ENCODE measurements at regions of chr22 and their contacts with region 1.

Region 1: DNA sequence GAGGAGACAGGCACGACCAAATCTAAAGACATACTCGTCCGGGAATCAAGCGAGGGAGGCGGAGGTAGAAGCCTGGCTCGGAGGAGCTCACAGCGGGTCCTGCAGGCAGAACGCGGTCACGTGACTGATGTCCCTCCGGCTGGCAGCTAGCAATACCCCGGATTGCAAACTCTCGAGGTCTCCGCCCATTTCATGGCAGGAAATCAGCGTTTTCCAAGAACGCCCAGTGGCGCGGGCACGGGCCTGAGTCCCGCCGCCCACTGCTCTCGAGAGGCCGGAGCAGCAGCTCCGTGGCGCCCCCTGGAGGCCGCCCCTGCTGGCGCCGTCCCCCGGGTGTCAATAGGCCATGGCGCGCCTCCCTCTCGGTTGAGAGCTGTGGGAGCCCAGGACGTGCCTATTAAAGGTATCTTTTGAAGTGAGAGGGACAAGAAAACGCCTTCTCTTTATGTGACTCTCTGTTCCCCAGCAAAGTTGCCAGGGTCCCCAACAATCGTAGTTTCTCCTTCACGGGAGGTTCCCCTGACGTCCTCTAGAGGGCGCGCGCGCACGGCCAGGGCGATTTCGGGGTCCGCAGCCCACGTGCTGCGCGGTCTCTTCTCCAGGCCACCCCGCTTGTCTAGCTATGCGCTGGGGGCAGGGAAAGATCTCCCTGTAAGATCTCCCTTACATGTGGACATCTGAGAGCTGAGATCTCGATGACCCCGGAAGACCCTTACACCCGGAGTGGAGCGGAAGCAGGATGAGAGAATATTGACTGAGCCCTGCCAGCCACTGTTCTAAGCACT is 37.3 kb upstream of the RBFOX2 start:
- DNase-seq: peak; percentile 87
- H3K4me3 ChIP-seq: peak overlapping the region; percentile 31 to 60 (median 38)
- H3K27ac ChIP-seq: peak overlapping the region; percentile 79 to 84 (median 82)
- H3K4me1 ChIP-seq: peaks cover 0 to 17% (median 3%) of the 10 kb centered on the region in 4 donors
- H3K27me3 ChIP-seq: no peaks in the 10 kb centered on the region
- CTCF ChIP-seq: peak; percentile 99 to 100 (median 100)
- EP300 ChIP-seq: peak; percentile 1
- POLR2A ChIP-seq: peak; percentile 18

Region 2: DNA sequence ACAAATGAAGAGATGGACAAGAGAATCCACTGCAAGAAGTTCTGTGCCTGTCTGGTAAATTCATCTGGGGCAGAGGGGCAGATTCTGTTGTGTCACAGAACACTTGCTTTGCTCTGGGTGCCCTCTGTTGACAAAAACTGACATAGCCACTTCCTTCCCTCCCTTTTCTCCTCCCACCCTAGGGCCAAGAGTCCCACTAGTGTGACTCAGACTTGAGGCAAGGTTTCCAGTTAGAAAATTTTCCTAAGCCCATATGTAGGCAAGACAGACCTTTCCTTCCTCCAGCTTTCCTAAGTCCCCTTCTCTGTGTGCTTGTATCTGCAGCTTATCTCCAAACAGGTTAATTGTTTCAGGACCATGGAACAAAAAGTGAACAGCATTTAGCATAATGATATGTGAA is 144.2 kb before region 1 on chr22:
- in situ Hi-C with region 1: loop called in 2 of 4 experiments (anchors 10 to 25 kb)
- intact Hi-C with region 1: no loop called
- DNase-seq: peak; percentile 70
- H3K4me3 ChIP-seq: no peak overlapping the region
- H3K27ac ChIP-seq: peak overlapping the region; percentile 30 to 70 (median 60)
- H3K4me1 ChIP-seq: peaks cover 0 to 48% (median 21%) of the 10 kb centered on the region in 4 donors
- H3K27me3 ChIP-seq: no peaks in the 10 kb centered on the region
- CTCF ChIP-seq: peak; percentile 50 to 62 (median 56)
- EP300 ChIP-seq: no peak
- POLR2A ChIP-seq: no peak

Region 3: DNA sequence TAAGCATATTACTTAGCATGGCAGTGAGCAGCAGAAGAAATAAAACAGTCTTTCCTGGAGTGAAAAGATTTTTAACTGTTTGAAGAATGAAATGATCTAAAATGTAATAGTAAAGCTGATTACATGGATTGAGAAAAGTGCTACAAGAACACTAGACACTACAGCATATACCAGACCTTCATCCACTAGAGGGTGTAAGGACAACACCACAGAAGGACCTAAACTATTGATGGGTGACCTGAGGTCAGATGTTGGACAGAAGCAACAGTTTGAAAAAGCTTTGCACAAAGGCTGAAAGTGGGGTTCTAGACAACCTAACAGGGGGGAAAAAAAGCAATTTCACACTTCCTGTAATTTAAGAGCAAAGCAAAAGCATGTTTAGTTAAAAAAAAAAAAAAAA is 135.0 kb before region 1 on chr22:
- in situ Hi-C with region 1: loop called (anchors 5 to 25 kb)
- intact Hi-C with region 1: loop called (anchors 1 kb)
- DNase-seq: no peak
- H3K4me3 ChIP-seq: no peak overlapping the region
- H3K27ac ChIP-seq: peak overlapping the region in 1 of 4 donors; percentile 8
- H3K4me1 ChIP-seq: peaks cover 0 to 12% (median 4%) of the 10 kb centered on the region in 4 donors
- H3K27me3 ChIP-seq: no peaks in the 10 kb centered on the region
- CTCF ChIP-seq: peak; percentile 52 to 66 (median 62)
- EP300 ChIP-seq: no peak
- POLR2A ChIP-seq: no peak

Measured in transverse colon (tissue), 4 donors.